ENCODE measurements at regions of chr6 and their contacts with region 1.

Region 1: GRCh38 chr6:106495014-106495413 is 134.3 kb downstream of the RTN4IP1 start:
- DNase-seq: no peak
- ATAC-seq: no peak
- H3K4me3 ChIP-seq: no peak overlapping the region
- H3K27ac ChIP-seq: no peak overlapping the region
- H3K4me1 ChIP-seq: no peaks in the 10 kb centered on the region
- H3K27me3 ChIP-seq: no peaks in the 10 kb centered on the region; the same call in 1 of the 2 replicates
- CTCF ChIP-seq: no peak

Region 2: DNA sequence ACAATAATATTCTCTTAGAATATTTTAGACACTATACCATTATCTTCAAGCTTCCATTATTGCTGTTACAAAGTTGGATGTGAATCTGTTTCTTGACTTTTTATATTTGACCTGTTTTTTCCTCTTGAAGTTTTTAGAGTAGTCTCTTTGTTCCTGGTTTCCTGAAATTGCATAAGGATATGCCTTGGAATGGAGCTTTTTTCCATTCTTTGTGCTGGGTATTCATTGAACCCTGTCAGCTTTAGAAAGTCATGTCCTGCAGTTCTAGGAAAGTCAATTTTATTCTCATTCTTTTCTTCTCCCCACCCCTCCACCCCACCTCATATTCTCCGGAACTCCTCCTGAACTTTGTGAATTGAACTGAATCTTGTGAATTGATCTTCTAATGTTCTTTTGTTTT is 1973.3 kb after region 1 on chr6:
- CTCF ChIA-PET with region 1: no interaction called
- POLR2A ChIA-PET with region 1: interaction called, 11 read pairs
- in situ Hi-C with region 1: no loop called
- intact Hi-C with region 1: no loop called
- DNase-seq: no peak
- ATAC-seq: no peak
- H3K4me3 ChIP-seq: no peak overlapping the region
- H3K27ac ChIP-seq: no peak overlapping the region
- H3K4me1 ChIP-seq: no peaks in the 10 kb centered on the region
- H3K27me3 ChIP-seq: no peaks in the 10 kb centered on the region
- CTCF ChIP-seq: no peak

Measured in Panc1 (cell line).